Dorsolateral prefrontal cortex (tissue), 120 donors: ENCODE measurements at regions of chr5 and their contacts with region 1.

Region 1: GRCh38 chr5:167530548-167530947 is 760.9 kb upstream of the WWC1 start:
- DNase-seq: no peak
- H3K4me3 ChIP-seq: no peak overlapping the region
- H3K27ac ChIP-seq: no peak overlapping the region
- H3K27me3 ChIP-seq: peaks cover 0 to 4% (median 0%) of the 10 kb centered on the region in 45 donors
- CTCF ChIP-seq: no peak

Region 2: DNA sequence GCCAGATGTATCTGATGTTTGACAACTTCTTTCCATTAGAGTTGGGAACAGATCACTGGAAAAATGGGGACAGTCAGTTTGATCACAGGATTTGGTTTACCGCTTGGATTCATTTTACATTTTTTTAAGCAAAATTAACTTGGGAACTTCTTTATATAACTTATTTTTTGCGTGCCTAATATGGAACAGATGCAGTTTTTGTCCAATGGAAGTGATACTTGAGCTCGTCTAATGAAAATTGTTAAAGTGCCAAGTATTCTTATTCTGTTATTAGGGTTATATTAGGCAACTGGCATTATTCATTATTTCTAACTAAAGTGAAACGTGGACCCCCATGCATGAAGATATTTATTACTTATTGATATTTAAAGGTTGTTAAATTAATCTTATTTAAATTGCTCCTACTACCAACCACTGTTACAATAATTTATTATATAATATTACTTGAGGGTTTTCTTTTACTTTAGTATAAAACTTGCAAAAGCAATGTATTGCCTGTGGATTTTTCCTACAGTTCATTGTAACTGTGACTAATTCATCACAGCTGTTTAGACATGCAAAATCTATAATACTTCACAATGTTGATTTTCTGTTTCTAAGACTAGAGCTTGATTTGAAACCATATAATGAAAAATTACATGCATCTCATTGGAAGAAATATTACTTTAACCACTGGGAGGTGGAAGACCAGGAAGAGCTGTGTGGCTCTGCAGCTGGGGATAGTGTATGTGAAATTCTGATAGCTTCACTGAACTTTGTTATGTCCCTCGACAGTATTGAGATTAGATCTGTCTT is 26.4 kb before region 1 on chr5:
- intact Hi-C with region 1: loop called in 1 of 2 experiments (anchors 5 kb)
- DNase-seq: no peak
- H3K4me3 ChIP-seq: no peak overlapping the region
- H3K27ac ChIP-seq: no peak overlapping the region
- H3K27me3 ChIP-seq: no peaks in the 10 kb centered on the region
- CTCF ChIP-seq: no peak

Region 3: GRCh38 chr5:167819406-167819805 is 288.9 kb after region 1 on chr5:
- intact Hi-C with region 1: no loop called
- DNase-seq: no peak
- H3K4me3 ChIP-seq: no peak overlapping the region
- H3K27ac ChIP-seq: no peak overlapping the region
- H3K27me3 ChIP-seq: no peaks in the 10 kb centered on the region
- CTCF ChIP-seq: no peak